ENCODE measurements at regions of chr7 and their contacts with region 1.

Region 1: DNA sequence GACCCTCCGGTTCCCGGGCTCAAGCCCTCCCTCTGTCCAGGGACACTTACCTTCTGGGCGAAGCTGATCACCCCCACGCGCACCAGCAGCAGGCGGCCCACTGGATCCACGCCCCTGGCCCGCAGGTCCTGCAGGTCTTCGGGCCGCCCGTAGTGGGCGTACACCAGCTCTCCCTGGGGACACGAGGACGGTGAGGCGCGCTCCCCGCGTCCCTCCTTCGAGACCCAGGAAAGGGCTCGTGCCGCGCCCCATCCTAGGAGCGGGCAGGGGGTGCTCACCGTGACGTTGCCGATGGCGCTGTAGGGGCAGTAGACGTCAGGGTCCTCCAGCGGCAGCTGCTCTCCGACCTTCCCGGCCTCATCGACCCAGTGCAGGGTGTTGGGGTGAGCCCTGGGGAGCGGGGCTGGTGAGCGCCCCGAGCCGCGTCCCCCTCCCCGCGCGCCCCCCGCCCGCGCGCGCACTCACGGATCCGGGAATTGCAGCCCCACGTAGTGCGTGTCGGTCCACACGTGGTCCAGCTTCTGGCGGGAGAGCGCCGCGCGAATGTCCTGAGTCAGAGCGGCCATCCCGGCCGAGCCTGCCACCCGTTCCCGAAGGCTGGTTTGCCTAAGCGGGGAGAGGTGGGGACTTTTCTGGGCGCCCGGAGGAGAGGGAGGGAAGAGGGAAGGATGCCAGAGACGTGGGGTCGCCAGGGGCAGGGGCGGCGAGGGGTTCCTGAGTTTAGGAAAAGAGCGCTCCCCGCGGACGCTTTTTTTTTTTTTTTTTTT is 8.2 kb downstream of the TFR2 start:
- DNase-seq: peak; percentile 77
- ATAC-seq: peak; percentile 77
- H3K4me3 ChIP-seq: peak overlapping the region in 4 of 5 experiments; percentile 62 to 82 (median 72)
- H3K4me3 Mint-ChIP-seq: peak overlapping the region; percentile 90
- H3K27ac ChIP-seq: peak overlapping the region in 1 of 2 donors; percentile 48
- H3K27ac Mint-ChIP-seq: peak overlapping the region; percentile 83
- H3K4me1 ChIP-seq: peaks cover 6 to 15% of the 10 kb centered on the region in 2 donors
- H3K4me1 Mint-ChIP-seq: peaks cover 10% of the 10 kb centered on the region
- H3K27me3 ChIP-seq: peaks cover 0 to 3% (median 0%) of the 10 kb centered on the region in 4 experiments
- H3K27me3 Mint-ChIP-seq: no peaks in the 10 kb centered on the region
- CTCF ChIP-seq: no peak

Region 2: GRCh38 chr7:100620239-100620638 is 12.9 kb before region 1 on chr7:
- CTCF ChIA-PET with region 1: interaction called, 14 read pairs
- POLR2A ChIA-PET with region 1: no interaction called
- intact Hi-C with region 1: no loop called
- DNase-seq: no peak
- ATAC-seq: no peak
- H3K4me3 ChIP-seq: no peak overlapping the region
- H3K4me3 Mint-ChIP-seq: no peak overlapping the region
- H3K27ac ChIP-seq: no peak overlapping the region
- H3K27ac Mint-ChIP-seq: no peak overlapping the region
- H3K4me1 ChIP-seq: no peaks in the 10 kb centered on the region
- H3K4me1 Mint-ChIP-seq: no peaks in the 10 kb centered on the region
- H3K27me3 ChIP-seq: no peaks in the 10 kb centered on the region
- H3K27me3 Mint-ChIP-seq: no peaks in the 10 kb centered on the region
- CTCF ChIP-seq: no peak

Region 3: GRCh38 chr7:100691676-100692577 is 58.8 kb after region 1 on chr7:
- CTCF ChIA-PET with region 1: interaction called, 53 read pairs
- POLR2A ChIA-PET with region 1: interaction called, 3 read pairs
- intact Hi-C with region 1: loop called (anchors 5 kb)
- DNase-seq: peak; percentile 86
- ATAC-seq: peak; percentile 60
- H3K4me3 ChIP-seq: peak overlapping the region in 2 of 5 experiments; percentile 58 to 79
- H3K4me3 Mint-ChIP-seq: peak overlapping the region; percentile 89
- H3K27ac ChIP-seq: no peak overlapping the region
- H3K27ac Mint-ChIP-seq: peak overlapping the region; percentile 92
- H3K4me1 ChIP-seq: peaks cover 52 to 55% of the 10 kb centered on the region in 2 donors
- H3K4me1 Mint-ChIP-seq: peaks cover 51% of the 10 kb centered on the region
- H3K27me3 ChIP-seq: no peaks in the 10 kb centered on the region
- H3K27me3 Mint-ChIP-seq: no peaks in the 10 kb centered on the region
- CTCF ChIP-seq: peak; percentile 88